ENCODE measurements at regions of chr21 and their contacts with region 1.

Region 1: GRCh38 chr21:36113647-36114428 is 21.0 kb upstream of the CBR3 start:
- DNase-seq: no peak
- CTCF ChIP-seq: no peak

Region 2: DNA sequence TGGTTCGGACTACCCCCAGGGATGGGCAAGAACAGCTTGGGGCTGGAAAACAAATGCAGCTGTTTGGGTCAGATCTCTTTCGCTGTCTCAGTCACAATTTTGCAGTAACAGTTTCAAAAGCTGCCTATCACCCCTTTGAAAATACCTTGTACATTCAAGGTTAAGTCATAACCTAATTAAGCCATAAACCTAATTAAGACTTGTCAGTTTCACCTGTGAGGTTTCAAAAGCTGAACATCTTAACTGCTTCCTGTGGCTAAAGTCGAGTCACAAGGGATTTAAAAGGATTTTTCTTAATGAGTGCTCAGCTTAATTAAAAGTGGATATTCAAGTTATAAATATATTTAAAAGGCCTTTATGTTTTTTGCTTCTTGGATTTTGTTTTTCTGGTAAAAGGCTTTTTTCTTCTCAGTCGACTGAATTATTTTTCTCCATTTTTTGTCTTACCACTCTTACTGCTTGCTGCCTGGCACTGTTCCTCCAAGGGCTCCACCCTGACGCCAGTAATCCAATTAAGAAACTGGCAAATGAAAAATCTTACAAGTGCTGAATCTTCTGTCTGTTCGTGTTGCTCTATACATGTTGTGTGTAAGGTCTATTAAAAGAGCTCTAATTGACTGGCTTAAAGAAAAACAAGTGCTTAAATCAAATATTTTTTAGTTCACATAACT is 12.7 kb before region 1 on chr21:
- CTCF ChIA-PET with region 1: interaction called, 10 read pairs
- POLR2A ChIA-PET with region 1: no interaction called
- DNase-seq: no peak
- CTCF ChIP-seq: no peak

Region 3: GRCh38 chr21:36125512-36126222 is 11.8 kb after region 1 on chr21:
- CTCF ChIA-PET with region 1: interaction called, 24 read pairs
- POLR2A ChIA-PET with region 1: no interaction called
- DNase-seq: peak; percentile 61
- CTCF ChIP-seq: peak; percentile 78

Measured in GM10248 (cell line).